ENCODE measurements at regions of chr2 and their contacts with region 1.

Region 1: DNA sequence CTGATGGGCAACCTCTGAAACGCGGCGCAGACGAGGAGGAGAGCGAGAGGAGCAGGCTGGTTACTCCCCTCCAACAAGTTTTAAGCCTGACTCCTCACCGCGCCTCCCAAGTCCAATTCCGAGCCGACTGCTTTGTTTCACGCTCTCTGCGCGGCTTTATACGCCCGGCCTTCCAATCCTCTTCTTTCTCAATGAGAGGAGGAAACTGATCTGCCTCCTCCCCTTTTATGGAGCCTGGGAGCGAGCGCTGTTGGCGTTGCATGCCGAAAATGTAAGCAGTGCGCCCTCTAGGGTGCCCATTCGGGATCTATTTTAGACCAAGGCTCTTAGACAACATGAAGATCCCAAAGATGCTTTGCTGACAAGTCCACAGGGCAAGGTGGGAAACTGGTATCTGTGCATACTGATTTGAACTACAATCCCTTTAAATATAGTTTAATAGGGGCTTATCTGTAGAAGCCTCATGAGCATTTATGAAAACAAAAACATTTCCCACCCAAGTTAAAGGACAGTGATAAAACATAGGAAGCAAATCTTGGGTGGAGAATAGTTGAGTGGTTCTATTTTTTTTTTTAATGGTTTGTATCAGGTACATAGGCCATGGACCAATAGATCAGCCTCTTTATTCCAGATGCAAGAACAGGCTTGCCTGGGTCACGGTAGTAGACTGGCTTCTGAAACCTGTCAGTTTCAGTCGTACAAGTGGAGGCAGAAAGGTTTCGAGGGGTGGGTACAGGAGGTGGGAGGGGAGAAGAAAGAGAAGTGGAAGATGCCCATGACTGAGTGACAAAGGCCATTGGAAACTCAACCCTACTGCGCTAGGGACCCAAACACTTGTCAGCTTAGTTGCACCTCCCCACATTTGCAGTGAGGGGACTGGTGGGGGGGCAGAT is at the start of gene RND3:
- DNase-seq: peak; percentile 99
- H3K4me3 ChIP-seq: peak within 1 kb of the TSS; percentile 87 to 97 (median 95)
- H3K27ac ChIP-seq: peak within 1 kb of the TSS; percentile 85
- H3K4me1 ChIP-seq: peaks cover 32% of the 10 kb centered on the region
- H3K27me3 ChIP-seq: no peaks in the 10 kb centered on the region
- CTCF ChIP-seq: peak; percentile 81 to 90
- POLR2A ChIP-seq: peak; percentile 100
- total RNA-seq, gene RND3: 132 and 158 TPM in 2 replicates

Region 2: DNA sequence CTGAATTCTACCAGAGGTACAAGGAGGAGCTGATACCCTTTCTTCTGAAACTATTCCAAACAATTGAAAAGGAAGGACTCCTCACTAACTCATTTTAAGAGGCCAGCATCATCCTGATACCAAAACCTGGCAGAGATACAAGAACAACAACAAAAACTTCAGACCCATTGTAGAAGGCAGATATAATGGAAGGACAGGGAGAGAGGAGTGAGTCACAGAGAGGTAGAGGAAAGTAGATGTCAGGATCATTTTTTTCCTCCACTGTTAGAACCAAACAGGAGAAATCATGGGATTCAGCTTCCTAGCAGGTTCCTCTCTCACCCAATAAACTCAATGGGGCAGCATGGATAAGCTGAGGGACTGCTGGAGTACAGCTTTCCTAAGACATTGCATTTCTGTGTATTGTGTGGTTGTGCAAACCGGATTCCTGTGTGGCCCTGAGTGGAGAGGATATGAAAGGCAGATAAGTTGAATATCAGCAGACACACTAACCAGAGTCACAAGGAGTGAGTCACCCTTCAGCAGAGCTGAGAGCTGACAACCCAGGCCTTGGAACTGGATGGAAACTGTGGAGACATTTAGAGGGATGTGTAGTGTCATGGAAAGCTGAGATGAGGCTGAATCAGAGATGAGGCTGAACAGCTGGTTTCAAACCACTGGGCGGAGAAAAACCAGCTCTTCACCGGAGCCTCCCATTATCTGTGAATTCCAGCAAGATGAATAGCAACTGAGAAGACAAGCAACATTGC is 839.3 kb before region 1 on chr2:
- CTCF ChIA-PET with region 1: interaction called, 5 read pairs
- POLR2A ChIA-PET with region 1: no interaction called
- dilution Hi-C with region 1: no loop called
- intact Hi-C with region 1: loop called (anchors 2 kb)
- DNase-seq: peak; percentile 91
- H3K4me3 ChIP-seq: no peak overlapping the region
- H3K27ac ChIP-seq: peak overlapping the region; percentile 70
- H3K4me1 ChIP-seq: peaks cover 23% of the 10 kb centered on the region
- H3K27me3 ChIP-seq: no peaks in the 10 kb centered on the region
- CTCF ChIP-seq: no peak
- POLR2A ChIP-seq: no peak

Region 3: DNA sequence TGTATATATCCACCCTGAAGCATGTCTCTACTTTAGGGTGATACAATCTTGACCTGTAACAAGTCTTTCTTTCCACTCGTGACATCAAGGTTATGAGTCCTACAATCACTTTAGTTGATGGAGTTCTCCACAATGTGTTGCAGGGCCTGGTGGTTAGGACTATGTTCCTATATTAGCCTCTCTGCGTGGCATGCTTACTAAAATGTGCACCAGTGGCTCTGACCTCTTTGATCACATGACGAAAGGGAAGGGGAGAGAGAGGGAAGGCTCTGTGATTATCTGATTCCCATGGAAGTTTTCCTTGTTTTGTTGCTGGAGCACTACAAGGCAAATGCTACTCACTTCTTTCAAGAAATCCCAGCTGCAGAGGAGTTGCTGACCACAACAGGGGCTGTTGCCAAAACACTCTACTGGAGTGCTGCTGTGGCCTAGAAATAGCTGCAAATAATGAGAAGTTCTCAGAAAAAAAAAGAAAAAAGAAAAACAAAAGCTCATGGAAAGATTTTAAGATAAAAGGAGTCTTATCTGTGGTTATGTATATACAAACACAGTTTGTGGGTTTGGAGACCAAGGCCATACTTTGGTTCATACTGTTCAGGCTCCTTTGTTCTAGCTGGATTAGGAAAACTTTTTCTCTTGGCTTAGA is 627.4 kb before region 1 on chr2:
- CTCF ChIA-PET with region 1: no interaction called
- POLR2A ChIA-PET with region 1: no interaction called
- dilution Hi-C with region 1: no loop called
- intact Hi-C with region 1: loop called (anchors 5 kb)
- DNase-seq: peak; percentile 75
- H3K4me3 ChIP-seq: no peak overlapping the region
- H3K27ac ChIP-seq: peak overlapping the region; percentile 11
- H3K4me1 ChIP-seq: peaks cover 36% of the 10 kb centered on the region
- H3K27me3 ChIP-seq: no peaks in the 10 kb centered on the region
- CTCF ChIP-seq: no peak
- POLR2A ChIP-seq: no peak

Region 4: GRCh38 chr2:150133623-150134022 is 354.2 kb before region 1 on chr2:
- CTCF ChIA-PET with region 1: no interaction called
- POLR2A ChIA-PET with region 1: no interaction called
- dilution Hi-C with region 1: loop called (anchors 25 kb)
- intact Hi-C with region 1: loop called (anchors 2 kb)
- DNase-seq: peak; percentile 97
- H3K4me3 ChIP-seq: no peak overlapping the region
- H3K27ac ChIP-seq: peak overlapping the region; percentile 90
- H3K4me1 ChIP-seq: peaks cover 17% of the 10 kb centered on the region
- H3K27me3 ChIP-seq: no peaks in the 10 kb centered on the region
- CTCF ChIP-seq: no peak
- POLR2A ChIP-seq: peak; percentile 38

Region 5: GRCh38 chr2:150296770-150297546 is 190.8 kb before region 1 on chr2:
- CTCF ChIA-PET with region 1: no interaction called
- POLR2A ChIA-PET with region 1: no interaction called
- dilution Hi-C with region 1: no loop called
- intact Hi-C with region 1: loop called (anchors 5 kb)
- DNase-seq: peak; percentile 92
- H3K4me3 ChIP-seq: no peak overlapping the region
- H3K27ac ChIP-seq: peak overlapping the region; percentile 81
- H3K4me1 ChIP-seq: peaks cover 17% of the 10 kb centered on the region
- H3K27me3 ChIP-seq: no peaks in the 10 kb centered on the region
- CTCF ChIP-seq: no peak
- POLR2A ChIP-seq: no peak

Region 6: DNA sequence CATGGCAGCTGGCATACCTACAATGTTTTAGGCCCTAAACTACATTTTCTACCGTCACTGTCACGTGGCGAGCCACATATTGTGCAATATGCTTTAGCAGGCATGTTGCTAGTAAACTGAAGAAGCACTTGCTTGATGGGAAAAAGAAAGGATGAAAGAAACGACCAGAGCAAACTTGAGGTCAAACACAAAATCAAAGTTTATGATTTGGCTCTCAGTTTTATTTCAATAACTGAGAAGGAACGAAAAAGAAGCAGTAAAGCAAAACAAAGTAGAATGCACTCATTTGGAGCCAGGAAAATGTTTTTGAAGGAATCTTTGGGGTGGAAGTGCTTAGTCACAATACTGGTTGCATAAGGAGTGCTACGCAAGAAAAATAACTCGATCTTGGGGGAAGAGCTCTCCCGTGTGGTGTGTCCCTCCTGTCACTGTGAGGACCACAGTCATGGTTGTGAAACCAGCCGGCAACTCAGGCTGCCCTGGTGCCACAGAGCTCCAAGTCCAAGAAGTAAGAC is 424.0 kb after region 1 on chr2:
- CTCF ChIA-PET with region 1: no interaction called
- POLR2A ChIA-PET with region 1: no interaction called
- dilution Hi-C with region 1: no loop called
- intact Hi-C with region 1: loop called (anchors 2 kb)
- DNase-seq: peak; percentile 77
- H3K4me3 ChIP-seq: no peak overlapping the region
- H3K27ac ChIP-seq: no peak overlapping the region
- H3K4me1 ChIP-seq: peaks cover 3% of the 10 kb centered on the region
- H3K27me3 ChIP-seq: peaks cover 0 to 2% of the 10 kb centered on the region in 2 experiments
- CTCF ChIP-seq: peak in 1 of 2 donors; percentile 27
- POLR2A ChIP-seq: no peak